Lower leg skin (tissue), 4 donors: ENCODE measurements at regions of chr11 and their contacts with region 1.

Region 1: GRCh38 chr11:67262731-67263675 is 3.3 kb upstream of the GRK2 start:
- DNase-seq: peak in 1 of 2 donors; percentile 95
- H3K4me3 ChIP-seq: no peak overlapping the region
- CTCF ChIP-seq: no peak
- POLR2A ChIP-seq: no peak

Region 2: DNA sequence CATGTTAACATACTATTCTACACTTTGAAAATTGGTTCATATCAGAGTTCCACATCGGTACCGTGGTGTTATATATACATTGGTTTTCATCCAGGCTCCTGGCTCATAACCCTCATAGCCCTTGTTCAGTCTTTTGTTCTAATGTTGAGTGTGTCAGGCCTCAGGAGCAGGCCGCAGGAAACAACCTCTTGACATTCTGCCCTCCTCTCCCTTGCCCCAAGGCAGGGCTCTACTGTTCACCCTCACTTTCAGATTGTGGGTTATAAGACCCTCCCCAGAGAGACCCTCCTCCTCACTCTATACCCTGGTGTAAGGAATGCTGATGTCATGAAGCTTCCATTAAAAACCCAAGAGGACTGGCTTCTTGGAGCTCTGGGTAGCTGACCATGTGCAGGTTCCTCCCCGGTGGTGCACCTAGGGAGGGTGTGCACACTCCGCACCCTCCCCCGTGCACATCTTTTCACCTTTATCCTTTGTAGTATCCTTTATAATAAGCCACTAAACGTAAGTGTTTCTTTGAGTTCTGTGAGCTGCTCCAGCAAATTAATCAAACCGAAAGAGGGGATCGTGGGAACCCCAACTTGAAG is 52.4 kb after region 1 on chr11:
- intact Hi-C with region 1: loop called (anchors 2 kb)
- DNase-seq: peak in 1 of 2 donors; percentile 62
- H3K4me3 ChIP-seq: no peak overlapping the region
- CTCF ChIP-seq: no peak
- POLR2A ChIP-seq: no peak